ENCODE measurements at regions of chr10 and their contacts with region 1.

Region 1: DNA sequence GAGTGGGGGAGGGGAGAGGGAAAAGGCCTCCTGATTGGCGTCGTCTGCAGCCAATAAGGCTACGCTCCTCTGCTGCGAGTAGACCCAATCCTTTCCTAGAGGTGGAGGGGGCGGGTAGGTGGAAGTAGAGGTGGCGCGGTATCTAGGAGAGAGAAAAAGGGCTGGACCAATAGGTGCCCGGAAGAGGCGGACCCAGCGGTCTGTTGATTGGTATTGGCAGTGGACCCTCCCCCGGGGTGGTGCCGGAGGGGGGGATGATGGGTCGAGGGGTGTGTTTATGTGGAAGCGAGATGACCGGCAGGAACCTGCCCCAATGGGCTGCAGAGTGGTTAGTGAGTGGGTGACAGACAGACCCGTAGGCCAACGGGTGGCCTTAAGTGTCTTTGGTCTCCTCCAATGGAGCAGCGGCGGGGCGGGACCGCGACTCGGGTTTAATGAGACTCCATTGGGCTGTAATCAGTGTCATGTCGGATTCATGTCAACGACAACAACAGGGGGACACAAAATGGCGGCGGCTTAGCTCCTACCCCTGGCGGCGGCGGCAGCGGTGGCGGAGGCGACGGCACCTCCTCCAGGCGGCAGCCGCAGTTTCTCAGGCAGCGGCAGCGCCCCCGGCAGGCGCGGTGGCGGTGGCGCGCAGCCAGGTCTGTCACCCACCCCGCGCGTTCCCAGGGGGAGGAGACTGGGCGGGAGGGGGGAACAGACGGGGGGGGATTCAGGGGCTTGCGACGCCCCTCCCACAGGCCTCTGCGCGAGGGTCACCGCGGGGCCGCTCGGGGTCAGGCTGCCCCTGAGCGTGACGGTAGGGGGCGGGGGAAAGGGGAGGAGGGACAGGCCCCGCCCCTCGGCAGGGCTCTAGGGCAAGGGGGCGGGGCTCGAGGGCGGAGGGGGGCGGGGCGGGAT is at the start of gene KAT6B:
- DNase-seq: peak; percentile 93 to 100 (median 100)
- ATAC-seq: peak; percentile 86
- H3K4me3 ChIP-seq: peak within 1 kb of the TSS; percentile 86
- H3K4me3 Mint-ChIP-seq: peak within 1 kb of the TSS; percentile 90 to 98 (median 92)
- H3K27ac ChIP-seq: peak within 1 kb of the TSS; percentile 98
- H3K27ac Mint-ChIP-seq: peak within 1 kb of the TSS; percentile 92 to 99 (median 98)
- H3K4me1 ChIP-seq: peaks cover 22 to 50% of the 10 kb centered on the region in 2 donors
- H3K4me1 Mint-ChIP-seq: peaks cover 44 to 74% (median 69%) of the 10 kb centered on the region in 7 donors
- H3K27me3 ChIP-seq: no peaks in the 10 kb centered on the region
- H3K27me3 Mint-ChIP-seq: no peaks in the 10 kb centered on the region
- total RNA-seq, gene KAT6B: 33.2 to 80.5 (median 68.5) TPM

Region 2: DNA sequence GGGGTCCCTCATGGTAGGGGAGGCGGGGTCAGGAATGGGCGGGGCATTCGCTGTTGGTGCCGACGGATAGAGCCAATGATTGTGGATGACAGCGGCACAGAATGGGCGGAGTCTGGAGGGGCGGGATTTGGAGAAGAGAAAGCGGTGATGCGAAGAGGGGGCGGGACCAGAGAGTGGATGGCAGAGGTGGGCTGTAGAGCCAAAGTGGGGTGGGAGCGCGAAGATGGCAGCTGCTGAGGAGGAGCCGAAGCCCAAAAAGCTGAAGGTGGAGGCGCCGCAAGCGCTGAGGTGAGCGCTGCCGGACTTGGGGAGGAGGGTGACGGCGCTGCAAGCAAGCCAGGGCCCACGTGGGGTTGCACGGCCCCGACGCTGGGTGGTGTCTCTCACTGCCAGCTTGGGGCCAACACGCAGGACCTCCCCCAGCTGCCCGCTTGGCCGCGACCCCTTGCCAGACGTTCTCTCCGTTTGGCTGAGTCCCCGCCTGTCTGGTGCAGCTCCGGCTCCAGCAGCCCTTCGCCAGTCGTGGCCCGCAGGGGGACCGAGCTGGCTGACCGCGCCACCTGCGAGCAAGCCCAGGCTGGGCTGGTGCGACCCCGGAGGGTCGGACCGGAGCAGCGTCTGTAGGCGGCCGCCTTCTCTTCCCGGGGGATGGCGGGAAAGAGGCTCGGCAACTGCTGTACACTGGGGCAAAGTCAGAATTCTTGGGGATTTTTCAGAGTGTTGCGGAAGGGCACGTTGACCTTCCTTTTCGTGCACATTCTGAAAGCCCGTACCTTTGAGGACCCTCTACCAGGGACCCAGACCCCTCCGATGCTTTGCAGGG is 675.1 kb before region 1 on chr10 and contains the start of gene ADK:
- CTCF ChIA-PET with region 1: no interaction called
- POLR2A ChIA-PET with region 1: no interaction called
- intact Hi-C with region 1: loop called (anchors 1 kb)
- DNase-seq: peak in 8 of 9 donors; percentile 96 to 100 (median 99)
- ATAC-seq: peak; percentile 99
- H3K4me3 ChIP-seq: peak within 1 kb of the TSS; percentile 90
- H3K4me3 Mint-ChIP-seq: no peak within 1 kb of the TSS
- H3K27ac ChIP-seq: peak within 1 kb of the TSS; percentile 84
- H3K27ac Mint-ChIP-seq: peak within 1 kb of the TSS in 5 of 9 donors; percentile 8 to 78 (median 47)
- H3K4me1 ChIP-seq: peaks cover 17 to 23% of the 10 kb centered on the region in 2 donors
- H3K4me1 Mint-ChIP-seq: peaks cover 36 to 56% (median 47%) of the 10 kb centered on the region in 7 donors
- H3K27me3 ChIP-seq: no peaks in the 10 kb centered on the region
- H3K27me3 Mint-ChIP-seq: no peaks in the 10 kb centered on the region
- total RNA-seq, gene ADK: 20.7 to 32.6 (median 25.0) TPM

Region 3: GRCh38 chr10:74419958-74420375 is 406.4 kb before region 1 on chr10:
- CTCF ChIA-PET with region 1: no interaction called
- POLR2A ChIA-PET with region 1: interaction called, 3 read pairs
- intact Hi-C with region 1: loop called in 1 of 2 experiments (anchors 2 kb)
- DNase-seq: peak in 7 of 9 donors; percentile 15 to 53 (median 48)
- ATAC-seq: peak; percentile 63
- H3K4me3 ChIP-seq: no peak overlapping the region
- H3K4me3 Mint-ChIP-seq: no peak overlapping the region
- H3K27ac ChIP-seq: no peak overlapping the region
- H3K27ac Mint-ChIP-seq: peak overlapping the region in 1 of 9 donors; percentile 57
- H3K4me1 ChIP-seq: no peaks in the 10 kb centered on the region
- H3K4me1 Mint-ChIP-seq: peaks cover 5 to 12% (median 7%) of the 10 kb centered on the region in 7 donors
- H3K27me3 ChIP-seq: no peaks in the 10 kb centered on the region
- H3K27me3 Mint-ChIP-seq: no peaks in the 10 kb centered on the region

Region 4: GRCh38 chr10:74753442-74754211 is 72.8 kb before region 1 on chr10:
- CTCF ChIA-PET with region 1: no interaction called
- POLR2A ChIA-PET with region 1: no interaction called
- intact Hi-C with region 1: loop called in 1 of 2 experiments (anchors 5 kb)
- DNase-seq: no peak
- ATAC-seq: no peak
- H3K4me3 ChIP-seq: no peak overlapping the region
- H3K4me3 Mint-ChIP-seq: no peak overlapping the region
- H3K27ac ChIP-seq: no peak overlapping the region
- H3K27ac Mint-ChIP-seq: peak overlapping the region in 1 of 9 donors; percentile 62
- H3K4me1 ChIP-seq: no peaks in the 10 kb centered on the region
- H3K4me1 Mint-ChIP-seq: peaks cover 0 to 14% (median 0%) of the 10 kb centered on the region in 7 donors
- H3K27me3 ChIP-seq: no peaks in the 10 kb centered on the region
- H3K27me3 Mint-ChIP-seq: no peaks in the 10 kb centered on the region

Region 5: DNA sequence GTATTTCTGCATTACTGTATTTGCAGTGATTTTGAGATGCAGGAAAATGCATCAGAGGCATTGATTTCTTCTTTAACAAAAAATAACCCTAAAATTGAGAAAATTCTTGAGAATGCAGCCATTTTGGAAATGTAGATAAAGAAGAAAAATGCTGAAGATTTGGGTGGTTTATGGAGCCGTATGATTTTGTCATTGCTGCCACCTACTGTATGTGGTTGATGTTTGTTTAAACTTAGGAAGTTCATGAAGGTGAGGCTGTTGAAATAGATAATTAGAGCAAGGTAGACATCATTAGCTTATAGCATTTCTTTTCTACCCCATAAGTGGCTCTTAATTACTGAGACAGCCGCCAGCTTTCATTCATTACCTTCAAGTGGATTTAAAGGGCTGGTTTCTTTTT is 193.0 kb after region 1 on chr10:
- CTCF ChIA-PET with region 1: no interaction called
- POLR2A ChIA-PET with region 1: no interaction called
- intact Hi-C with region 1: loop called (anchors 1 to 2 kb)
- DNase-seq: peak in 7 of 9 donors; percentile 15 to 53 (median 43)
- ATAC-seq: peak; percentile 63
- H3K4me3 ChIP-seq: no peak overlapping the region
- H3K4me3 Mint-ChIP-seq: no peak overlapping the region
- H3K27ac ChIP-seq: no peak overlapping the region
- H3K27ac Mint-ChIP-seq: peak overlapping the region in 5 of 9 donors; percentile 4 to 62 (median 16)
- H3K4me1 ChIP-seq: peaks cover 8 to 12% of the 10 kb centered on the region in 2 donors
- H3K4me1 Mint-ChIP-seq: peaks cover 6 to 38% (median 23%) of the 10 kb centered on the region in 7 donors
- H3K27me3 ChIP-seq: no peaks in the 10 kb centered on the region
- H3K27me3 Mint-ChIP-seq: no peaks in the 10 kb centered on the region

Region 6: DNA sequence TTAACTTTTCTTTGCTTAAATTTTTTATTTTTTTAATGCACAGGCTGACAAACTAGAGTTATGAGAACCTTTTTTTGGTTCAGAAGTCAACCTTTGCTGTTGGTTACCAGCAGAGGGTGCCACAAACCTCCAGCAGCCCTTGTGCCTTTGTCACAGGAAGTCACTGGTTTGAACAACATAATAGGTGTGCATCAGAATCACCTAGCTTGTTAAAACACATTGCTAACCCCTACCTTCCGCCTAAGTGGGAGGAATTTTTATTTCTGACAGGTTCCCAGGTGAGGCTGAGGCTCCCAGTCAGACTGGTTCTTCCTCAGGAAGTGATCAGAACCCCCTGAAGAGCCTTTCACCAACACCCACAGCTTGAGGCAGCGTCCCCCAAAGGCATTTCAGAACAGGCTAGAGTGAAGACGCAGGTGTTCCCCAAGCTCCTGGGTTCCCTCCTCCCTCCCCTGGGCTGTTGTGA is 361.6 kb after region 1 on chr10:
- CTCF ChIA-PET with region 1: no interaction called
- POLR2A ChIA-PET with region 1: no interaction called
- intact Hi-C with region 1: loop called in 1 of 2 experiments (anchors 1 kb)
- DNase-seq: peak; percentile 33 to 84 (median 77)
- ATAC-seq: peak; percentile 94
- H3K4me3 ChIP-seq: no peak overlapping the region
- H3K4me3 Mint-ChIP-seq: peak overlapping the region in 1 of 10 donors; percentile 11
- H3K27ac ChIP-seq: peak overlapping the region; percentile 59
- H3K27ac Mint-ChIP-seq: peak overlapping the region; percentile 58 to 98 (median 90)
- H3K4me1 ChIP-seq: peaks cover 4 to 5% of the 10 kb centered on the region in 2 donors
- H3K4me1 Mint-ChIP-seq: peaks cover 0 to 12% (median 7%) of the 10 kb centered on the region in 7 donors
- H3K27me3 ChIP-seq: no peaks in the 10 kb centered on the region
- H3K27me3 Mint-ChIP-seq: no peaks in the 10 kb centered on the region

Measured in naive thymus-derived CD4-positive, alpha-beta T cell (primary cell).